Mammary epithelial cell (primary cell): ENCODE measurements at regions of chr1 and their contacts with region 1.

Region 1: GRCh38 chr1:223233410-223234169 is 90.5 kb upstream of the TLR5 start:
- DNase-seq: peak; percentile 94
- H3K4me3 ChIP-seq: no peak overlapping the region
- H3K27ac ChIP-seq: peak overlapping the region; percentile 91
- H3K4me1 ChIP-seq: peaks cover 58% of the 10 kb centered on the region
- H3K27me3 ChIP-seq: no peaks in the 10 kb centered on the region
- CTCF ChIP-seq: no peak

Region 2: DNA sequence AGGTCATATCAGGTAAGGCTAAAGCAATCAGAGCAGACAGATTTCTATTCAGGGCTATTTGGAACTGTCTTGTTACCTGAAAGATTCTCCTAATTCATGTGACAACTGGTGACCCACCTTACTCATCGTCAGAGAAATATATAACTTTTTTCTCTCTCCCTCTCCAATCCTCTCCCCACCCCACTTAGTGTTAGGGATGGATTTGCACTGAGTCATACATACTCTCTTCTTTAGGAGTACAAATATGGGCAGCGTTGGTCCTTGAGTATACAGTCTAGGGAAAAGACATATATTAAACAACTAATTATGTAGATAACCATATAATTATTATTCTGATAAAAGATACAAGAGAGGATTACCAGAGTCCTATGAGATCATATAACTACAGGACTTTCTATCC is 931.9 kb before region 1 on chr1:
- CTCF ChIA-PET with region 1: no interaction called
- dilution Hi-C with region 1: no loop called
- in situ Hi-C with region 1: no loop called
- intact Hi-C with region 1: no loop called
- DNase-seq: no peak
- H3K4me3 ChIP-seq: no peak overlapping the region
- H3K27ac ChIP-seq: no peak overlapping the region
- H3K4me1 ChIP-seq: no peaks in the 10 kb centered on the region
- H3K27me3 ChIP-seq: no peaks in the 10 kb centered on the region
- CTCF ChIP-seq: no peak

Region 3: DNA sequence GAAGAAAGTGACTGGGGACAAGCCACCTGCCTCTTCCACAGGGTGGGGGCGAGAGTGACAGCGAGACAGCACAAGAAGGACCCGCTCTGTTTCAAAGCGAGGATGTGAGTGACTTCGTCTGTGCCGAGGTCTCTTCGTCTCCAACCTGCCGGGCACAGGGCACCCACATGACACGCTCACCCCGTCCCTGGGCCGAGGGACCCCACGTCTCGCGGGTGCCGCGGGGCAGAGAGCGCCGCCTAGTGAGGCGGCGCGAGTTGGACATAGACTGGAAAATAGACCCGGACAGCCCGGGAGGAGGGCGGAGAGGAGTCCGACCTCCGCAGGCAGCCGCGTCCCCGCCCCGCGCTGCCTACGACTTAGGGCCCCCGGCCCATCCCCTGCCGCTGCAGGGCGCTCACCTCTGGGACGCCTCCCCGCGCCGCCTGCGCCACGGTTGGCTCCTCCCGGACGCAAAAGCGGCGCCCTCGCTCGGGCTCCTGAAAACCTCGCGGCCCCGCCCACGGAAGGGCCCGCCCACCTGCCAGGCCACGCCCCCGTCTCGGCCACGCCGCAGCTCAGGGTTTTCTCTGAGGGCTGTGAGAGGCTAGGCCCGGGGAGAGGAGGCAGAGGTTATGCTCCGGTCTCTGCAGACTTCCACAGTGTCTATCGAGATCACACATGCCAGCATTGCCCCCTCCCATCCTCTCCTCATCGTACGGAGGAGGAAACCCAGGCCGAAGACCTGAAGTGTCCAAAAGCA is 90.6 kb before region 1 on chr1 and contains the start of gene TLR5:
- CTCF ChIA-PET with region 1: no interaction called
- dilution Hi-C with region 1: no loop called
- in situ Hi-C with region 1: no loop called
- intact Hi-C with region 1: loop called (anchors 5 kb)
- DNase-seq: peak; percentile 63
- H3K4me3 ChIP-seq: peak within 1 kb of the TSS; percentile 38 to 64 (median 58)
- H3K27ac ChIP-seq: no peak within 1 kb of the TSS
- H3K4me1 ChIP-seq: peaks cover 4% of the 10 kb centered on the region
- H3K27me3 ChIP-seq: no peaks in the 10 kb centered on the region
- CTCF ChIP-seq: peak; percentile 33 to 76
- total RNA-seq, gene TLR5: 1.3 to 1.5 TPM

Region 4: GRCh38 chr1:223198628-223198965 is 35.0 kb before region 1 on chr1:
- CTCF ChIA-PET with region 1: no interaction called
- dilution Hi-C with region 1: no loop called
- in situ Hi-C with region 1: no loop called
- intact Hi-C with region 1: loop called (anchors 1 kb)
- DNase-seq: no peak
- H3K4me3 ChIP-seq: no peak overlapping the region
- H3K27ac ChIP-seq: no peak overlapping the region
- H3K4me1 ChIP-seq: peaks cover 10% of the 10 kb centered on the region
- H3K27me3 ChIP-seq: no peaks in the 10 kb centered on the region
- CTCF ChIP-seq: no peak

Region 5: DNA sequence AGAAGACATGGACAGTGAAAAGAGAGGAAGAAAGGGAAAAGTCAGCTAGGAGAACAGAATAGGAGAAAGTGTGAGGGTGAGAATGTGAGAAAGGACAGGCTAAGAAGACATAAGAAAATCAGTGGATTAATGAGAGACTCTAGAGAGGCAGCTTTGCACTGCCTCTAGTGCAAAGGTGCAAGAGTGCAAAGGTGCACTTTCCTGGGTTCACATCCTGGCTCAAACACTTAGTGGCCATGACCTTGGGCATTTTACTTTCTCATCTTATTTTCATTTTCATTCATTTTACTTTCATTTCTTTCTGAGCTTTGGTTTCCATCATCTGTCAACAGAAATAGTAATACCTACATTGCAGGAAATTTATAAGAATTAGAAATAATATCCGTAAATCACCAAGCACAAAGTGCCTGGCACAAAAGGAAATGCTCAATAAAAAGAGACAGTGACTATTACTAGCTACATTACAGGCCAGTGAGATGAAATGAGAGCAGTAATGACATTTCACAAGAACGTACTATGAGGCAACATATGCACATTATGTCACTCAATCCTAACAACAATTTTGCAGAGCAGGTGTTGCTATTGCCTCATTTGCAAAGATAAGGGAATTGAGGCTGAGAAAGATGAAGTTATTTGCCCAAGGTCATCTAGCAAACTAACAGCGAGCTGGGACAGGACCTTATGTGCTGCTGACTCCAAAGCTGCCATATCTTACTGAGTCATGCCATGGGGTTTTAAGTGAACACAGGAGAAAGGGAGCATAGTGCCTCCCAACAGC is 16.5 kb after region 1 on chr1:
- CTCF ChIA-PET with region 1: no interaction called
- dilution Hi-C with region 1: no loop called
- in situ Hi-C with region 1: no loop called
- intact Hi-C with region 1: loop called (anchors 2 kb)
- DNase-seq: peak; percentile 68
- H3K4me3 ChIP-seq: no peak overlapping the region
- H3K27ac ChIP-seq: no peak overlapping the region
- H3K4me1 ChIP-seq: peaks cover 10% of the 10 kb centered on the region
- H3K27me3 ChIP-seq: no peaks in the 10 kb centered on the region
- CTCF ChIP-seq: no peak

Region 6: GRCh38 chr1:223358826-223359225 is 125.2 kb after region 1 on chr1:
- CTCF ChIA-PET with region 1: no interaction called
- dilution Hi-C with region 1: no loop called
- in situ Hi-C with region 1: no loop called
- intact Hi-C with region 1: loop called (anchors 5 kb)
- DNase-seq: peak; percentile 21
- H3K4me3 ChIP-seq: no peak overlapping the region
- H3K27ac ChIP-seq: no peak overlapping the region
- H3K4me1 ChIP-seq: peaks cover 21% of the 10 kb centered on the region
- H3K27me3 ChIP-seq: peaks cover 7% of the 10 kb centered on the region
- CTCF ChIP-seq: peak in 1 of 2 donors; percentile 58

Region 7: GRCh38 chr1:223429313-223429731 is 195.7 kb after region 1 on chr1:
- CTCF ChIA-PET with region 1: no interaction called
- dilution Hi-C with region 1: no loop called
- in situ Hi-C with region 1: no loop called
- intact Hi-C with region 1: loop called (anchors 10 kb)
- DNase-seq: peak; percentile 86
- H3K4me3 ChIP-seq: no peak overlapping the region
- H3K27ac ChIP-seq: peak overlapping the region; percentile 42
- H3K4me1 ChIP-seq: peaks cover 17% of the 10 kb centered on the region
- H3K27me3 ChIP-seq: no peaks in the 10 kb centered on the region
- CTCF ChIP-seq: peak; percentile 11 to 43

Region 8: DNA sequence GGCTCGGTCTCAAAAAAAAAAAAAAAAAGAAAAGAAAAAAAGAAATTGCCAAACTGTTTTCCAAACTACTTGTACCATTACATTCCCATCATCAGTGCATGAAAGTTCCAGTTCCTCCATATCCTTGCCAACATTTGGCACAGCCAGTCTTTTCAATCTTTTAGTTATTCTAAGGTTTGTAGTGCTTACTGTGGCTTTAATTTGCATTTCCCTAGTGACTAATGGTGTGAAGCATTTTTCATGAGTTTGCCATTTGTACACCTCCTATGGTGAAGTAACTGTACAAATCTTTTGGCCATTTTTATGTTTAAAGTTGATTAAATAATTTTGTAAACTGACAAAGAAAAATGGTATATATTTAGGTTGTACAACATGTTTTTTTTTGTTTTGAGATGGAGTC is 1020.1 kb after region 1 on chr1:
- CTCF ChIA-PET with region 1: no interaction called
- dilution Hi-C with region 1: no loop called
- in situ Hi-C with region 1: no loop called
- intact Hi-C with region 1: no loop called
- DNase-seq: no peak
- H3K4me3 ChIP-seq: no peak overlapping the region
- H3K27ac ChIP-seq: no peak overlapping the region
- H3K4me1 ChIP-seq: no peaks in the 10 kb centered on the region
- H3K27me3 ChIP-seq: no peaks in the 10 kb centered on the region
- CTCF ChIP-seq: no peak